ENCODE measurements at regions of chr2 and their contacts with region 1.

Region 1: DNA sequence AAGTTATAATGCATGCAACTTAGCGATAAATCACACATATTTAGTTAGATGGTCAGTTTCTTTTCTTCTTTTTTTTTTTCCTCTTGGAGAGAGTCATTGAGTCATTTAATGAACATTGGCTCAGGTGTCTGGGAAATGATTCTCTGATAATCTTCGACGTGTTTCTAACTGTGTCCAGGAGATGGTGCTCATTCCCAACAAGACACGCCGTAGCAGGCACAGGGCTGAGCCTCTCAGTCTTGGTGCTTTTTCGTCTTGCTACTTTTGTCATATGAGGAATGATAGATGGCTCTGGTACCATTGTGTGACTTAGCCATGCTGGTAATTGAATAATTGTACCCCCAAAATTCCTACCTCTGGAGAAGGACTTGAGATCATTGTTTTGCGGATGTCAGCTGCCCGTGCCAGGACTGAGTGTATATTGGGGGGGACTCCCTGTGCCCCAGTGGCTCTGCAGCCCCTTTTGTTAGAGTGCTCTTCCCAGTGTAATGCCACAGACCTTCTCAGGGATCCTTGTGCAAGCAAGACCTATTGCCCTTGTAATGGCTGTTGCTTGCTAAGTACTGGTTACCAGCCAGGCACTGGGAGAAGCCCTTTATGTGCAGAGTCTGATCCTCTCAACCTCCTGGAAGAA is 107.6 kb upstream of the CYRIA start:
- DNase-seq: peak; percentile 41
- H3K4me3 ChIP-seq: no peak overlapping the region
- H3K27ac ChIP-seq: no peak overlapping the region
- H3K4me1 ChIP-seq: no peaks in the 10 kb centered on the region
- H3K27me3 ChIP-seq: no peaks in the 10 kb centered on the region
- CTCF ChIP-seq: peak in 3 of 4 experiments; percentile 46 to 73 (median 65)
- POLR2A ChIP-seq: no peak

Region 2: DNA sequence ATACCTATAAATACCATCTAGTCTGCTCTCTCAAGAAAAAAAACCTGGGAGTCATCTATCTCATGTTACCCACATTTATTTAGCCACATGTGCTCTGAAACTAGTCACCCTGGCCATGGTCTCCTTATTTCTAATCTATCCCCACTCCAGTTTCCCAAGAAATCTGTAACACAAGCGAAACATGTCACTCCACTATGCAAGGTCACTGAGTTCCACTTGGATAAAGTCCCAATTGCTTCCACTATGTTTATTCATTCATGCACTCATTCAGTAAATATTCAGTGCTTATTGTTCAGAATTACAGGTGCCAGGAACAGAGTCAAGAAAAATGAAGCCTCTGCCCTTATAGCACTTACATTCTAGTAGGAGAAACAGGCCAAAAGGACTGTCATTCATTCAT is 261.8 kb after region 1 on chr2:
- intact Hi-C with region 1: no loop called
- DNase-seq: no peak
- H3K4me3 ChIP-seq: no peak overlapping the region
- H3K27ac ChIP-seq: no peak overlapping the region
- H3K4me1 ChIP-seq: no peaks in the 10 kb centered on the region
- H3K27me3 ChIP-seq: no peaks in the 10 kb centered on the region
- CTCF ChIP-seq: no peak
- POLR2A ChIP-seq: no peak

Region 3: DNA sequence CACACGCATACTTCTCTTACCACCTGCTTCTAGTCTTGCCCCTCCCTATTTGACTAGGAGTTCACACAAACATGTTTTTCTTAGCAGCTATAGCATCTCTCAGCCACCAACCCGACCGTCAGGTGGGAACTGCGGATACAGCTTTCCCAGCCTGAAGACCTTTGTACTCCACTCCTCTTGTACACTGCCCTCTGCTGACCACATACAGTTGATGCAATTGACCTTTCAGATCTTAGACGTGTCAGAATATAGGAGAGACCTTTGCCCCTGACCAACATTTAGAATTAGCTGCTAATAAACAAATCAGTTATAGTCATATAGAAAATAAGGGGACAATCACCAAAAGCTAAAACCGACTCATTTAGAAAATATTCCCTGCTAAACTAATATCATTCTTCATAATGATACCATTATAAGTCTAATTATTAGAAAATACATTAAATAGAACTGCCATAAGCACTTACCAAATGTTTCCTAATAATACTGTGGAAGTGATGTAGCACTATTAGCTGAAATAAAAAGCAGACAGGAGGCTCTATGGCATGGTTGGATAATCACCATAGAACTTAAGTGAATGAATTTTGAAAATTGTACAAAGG is 536.6 kb after region 1 on chr2:
- intact Hi-C with region 1: loop called (anchors 10 kb)
- DNase-seq: peak; percentile 28
- H3K4me3 ChIP-seq: no peak overlapping the region
- H3K27ac ChIP-seq: no peak overlapping the region
- H3K4me1 ChIP-seq: no peaks in the 10 kb centered on the region
- H3K27me3 ChIP-seq: no peaks in the 10 kb centered on the region
- CTCF ChIP-seq: peak; percentile 36 to 62 (median 57)
- POLR2A ChIP-seq: no peak

Region 4: GRCh38 chr2:17672583-17673317 is 899.6 kb after region 1 on chr2:
- intact Hi-C with region 1: loop called (anchors 5 kb)
- DNase-seq: no peak
- H3K4me3 ChIP-seq: no peak overlapping the region
- H3K27ac ChIP-seq: no peak overlapping the region
- H3K4me1 ChIP-seq: no peaks in the 10 kb centered on the region
- H3K27me3 ChIP-seq: no peaks in the 10 kb centered on the region
- CTCF ChIP-seq: no peak
- POLR2A ChIP-seq: no peak

Measured in prostate gland (tissue), 2 donors.